ENCODE measurements at regions of chr2 and their contacts with region 1.

Region 1: GRCh38 chr2:209577376-209578357 is 153.8 kb downstream of the MAP2 start:
- DNase-seq: no peak
- H3K4me3 Mint-ChIP-seq: no peak overlapping the region
- H3K27ac Mint-ChIP-seq: no peak overlapping the region
- H3K4me1 Mint-ChIP-seq: peaks cover 2% of the 10 kb centered on the region
- H3K27me3 Mint-ChIP-seq: peaks cover 5% of the 10 kb centered on the region

Region 2: DNA sequence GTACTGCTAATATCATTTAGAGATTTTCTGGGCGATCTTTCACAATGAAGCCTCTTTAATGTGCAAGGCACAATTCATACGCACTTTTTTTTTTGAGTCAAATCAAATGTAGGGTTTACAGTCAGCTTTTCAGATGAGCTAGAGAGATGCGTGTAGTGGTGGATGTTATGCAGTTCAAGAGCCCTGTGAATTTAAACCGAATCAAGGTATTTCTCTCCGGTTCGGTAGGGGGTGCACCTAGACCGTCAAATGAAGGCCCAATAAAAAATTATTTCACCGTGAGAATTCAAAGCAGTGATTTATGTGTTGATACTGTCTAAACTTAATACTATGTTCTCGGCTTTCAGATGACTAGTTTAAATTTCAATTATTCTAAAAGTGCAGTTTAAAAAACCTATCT is 1170.0 kb before region 1 on chr2:
- intact Hi-C with region 1: loop called (anchors 10 kb)
- DNase-seq: no peak
- H3K4me3 Mint-ChIP-seq: no peak overlapping the region
- H3K27ac Mint-ChIP-seq: no peak overlapping the region
- H3K4me1 Mint-ChIP-seq: peaks cover 2% of the 10 kb centered on the region
- H3K27me3 Mint-ChIP-seq: peaks cover 50% of the 10 kb centered on the region

Region 3: DNA sequence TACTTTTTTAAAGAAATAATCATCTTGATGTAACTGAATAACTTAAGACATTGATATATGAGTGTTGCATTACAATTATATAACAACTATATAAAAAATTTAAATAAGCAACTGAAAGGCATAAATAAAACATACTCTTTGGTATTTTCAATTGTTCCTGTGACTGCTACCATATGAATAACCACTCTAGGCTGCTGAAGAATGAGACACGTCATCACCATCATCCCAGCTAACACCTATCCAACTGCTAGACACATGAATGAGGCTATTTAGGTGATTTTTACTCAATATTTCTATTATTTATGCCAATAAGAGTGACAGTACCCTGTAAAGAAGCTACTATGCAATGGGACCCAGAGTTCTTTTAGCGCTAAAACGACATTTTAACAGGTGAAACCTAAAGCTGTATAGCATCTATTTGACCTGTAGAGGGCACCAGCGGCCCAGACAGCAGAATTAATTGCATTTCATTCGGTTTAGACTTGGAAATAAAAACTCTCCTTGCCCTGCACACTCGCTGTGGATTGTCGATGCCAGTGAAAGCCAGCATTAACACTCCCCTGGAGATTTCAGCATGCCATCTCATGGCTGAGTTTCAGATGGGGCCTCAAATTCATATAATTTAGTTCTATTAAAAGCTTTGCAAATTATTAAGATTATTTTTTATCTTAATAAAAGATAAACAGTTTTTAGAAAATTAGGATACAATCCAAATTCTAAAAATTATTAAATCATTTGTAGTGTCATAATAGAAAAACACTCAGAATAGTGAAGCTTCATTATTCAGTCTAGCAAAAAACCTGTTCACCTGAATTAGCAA is 243.3 kb before region 1 on chr2:
- intact Hi-C with region 1: loop called (anchors 2 kb)
- DNase-seq: no peak
- H3K4me3 Mint-ChIP-seq: no peak overlapping the region
- H3K27ac Mint-ChIP-seq: no peak overlapping the region
- H3K4me1 Mint-ChIP-seq: no peaks in the 10 kb centered on the region
- H3K27me3 Mint-ChIP-seq: no peaks in the 10 kb centered on the region